PC-3 (cell line): ENCODE measurements at regions of chr1 and their contacts with region 1.

Region 1: DNA sequence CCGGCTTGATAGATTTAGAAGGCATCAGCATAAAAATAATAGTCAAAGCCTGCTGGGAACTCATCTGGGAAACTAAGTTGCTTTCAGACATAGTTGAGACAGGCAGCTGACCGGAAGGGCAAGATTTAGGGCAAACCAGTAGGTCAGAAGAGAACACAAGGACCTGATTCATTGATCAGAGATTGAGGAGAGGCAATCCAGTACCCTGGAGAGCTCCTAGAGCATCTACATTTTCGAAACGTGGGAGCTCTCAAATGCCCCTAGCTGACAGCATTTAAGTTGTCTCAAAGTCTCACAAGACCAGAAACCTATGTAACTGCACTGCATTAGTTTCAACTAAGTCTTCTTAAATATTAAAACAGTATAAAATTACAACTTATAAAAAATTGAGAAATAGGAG is 22.9 kb upstream of the MTF2 start:
- DNase-seq: peak; percentile 44
- ATAC-seq: no peak
- H3K4me3 ChIP-seq: no peak overlapping the region
- H3K27ac ChIP-seq: no peak overlapping the region
- H3K4me1 ChIP-seq: no peaks in the 10 kb centered on the region
- H3K27me3 ChIP-seq: no peaks in the 10 kb centered on the region
- CTCF ChIP-seq: no peak

Region 2: DNA sequence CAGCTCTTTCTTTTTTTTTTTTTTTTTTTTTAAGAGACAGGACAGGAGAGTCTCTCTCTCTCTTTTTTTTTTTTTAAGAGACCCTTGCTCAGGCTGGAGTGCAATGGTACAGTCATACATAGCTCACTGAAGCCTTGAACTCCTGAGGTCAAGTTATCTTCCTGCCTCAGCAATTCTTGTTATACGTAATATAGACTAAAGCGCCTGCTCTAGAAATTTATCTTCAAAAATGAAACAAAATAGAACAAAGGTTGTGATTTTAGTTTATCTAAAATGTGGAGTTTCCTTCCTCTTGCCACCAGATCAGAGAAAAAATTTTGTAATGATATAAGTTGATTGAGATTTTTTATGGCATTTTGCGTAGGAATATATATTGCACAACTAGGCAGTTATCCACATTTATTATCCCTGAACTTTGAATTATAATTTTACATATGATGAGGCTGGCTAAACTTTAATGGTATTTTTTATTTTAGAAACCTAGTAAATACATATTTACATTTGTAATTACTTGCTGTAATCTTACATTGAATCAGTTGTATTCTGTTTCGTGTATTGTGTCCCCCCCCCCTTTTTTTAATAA is 67.1 kb after region 1 on chr1:
- CTCF ChIA-PET with region 1: interaction called, 14 read pairs
- POLR2A ChIA-PET with region 1: no interaction called
- intact Hi-C with region 1: no loop called
- DNase-seq: no peak
- ATAC-seq: no peak
- H3K4me3 ChIP-seq: no peak overlapping the region
- H3K27ac ChIP-seq: no peak overlapping the region
- H3K4me1 ChIP-seq: no peaks in the 10 kb centered on the region
- H3K27me3 ChIP-seq: no peaks in the 10 kb centered on the region
- CTCF ChIP-seq: no peak